Cardiac septum (tissue), 1 donor: ENCODE measurements at regions of chr21 and their contacts with region 1.

Region 1: DNA sequence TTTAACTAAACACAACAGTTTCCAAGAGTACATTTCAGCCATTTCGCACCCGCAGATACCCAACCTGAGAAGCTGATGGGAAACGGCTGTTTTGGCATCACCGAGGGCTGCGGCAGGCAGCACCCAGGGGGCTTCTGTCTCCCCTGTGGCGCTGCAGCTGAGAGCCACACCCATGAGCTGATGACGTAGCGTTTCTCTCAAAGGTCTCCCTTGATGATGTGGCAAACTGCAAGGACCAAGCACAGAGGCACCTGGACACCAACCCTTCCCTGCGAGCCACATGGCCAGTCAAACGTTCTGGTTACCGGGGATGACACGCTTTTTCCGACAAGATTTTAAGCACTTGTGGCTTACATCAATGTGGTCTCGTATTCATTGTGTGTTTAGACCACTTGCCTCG is 150.8 kb upstream of the ERG start:
- DNase-seq: no peak

Region 2: DNA sequence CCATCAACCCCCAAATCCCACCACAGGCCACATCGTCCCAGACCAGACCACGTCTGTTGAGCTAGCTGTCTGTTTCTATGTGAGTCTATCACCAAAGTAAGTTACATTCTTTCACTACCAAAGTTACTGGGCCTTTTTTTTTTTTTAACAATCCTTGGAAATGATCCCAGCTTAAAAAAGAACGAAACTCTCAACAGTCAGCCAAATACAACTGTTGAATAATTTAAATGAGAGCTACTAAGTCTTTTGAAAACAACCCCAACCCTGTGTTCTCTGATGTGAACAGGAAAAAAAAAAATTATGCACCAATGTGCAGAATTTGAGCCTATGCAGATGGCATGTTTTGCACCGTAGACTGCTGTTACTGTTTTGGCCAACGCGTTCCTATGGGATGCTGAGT is 22.7 kb after region 1 on chr21:
- intact Hi-C with region 1: loop called (anchors 2 kb)
- DNase-seq: no peak

Region 3: DNA sequence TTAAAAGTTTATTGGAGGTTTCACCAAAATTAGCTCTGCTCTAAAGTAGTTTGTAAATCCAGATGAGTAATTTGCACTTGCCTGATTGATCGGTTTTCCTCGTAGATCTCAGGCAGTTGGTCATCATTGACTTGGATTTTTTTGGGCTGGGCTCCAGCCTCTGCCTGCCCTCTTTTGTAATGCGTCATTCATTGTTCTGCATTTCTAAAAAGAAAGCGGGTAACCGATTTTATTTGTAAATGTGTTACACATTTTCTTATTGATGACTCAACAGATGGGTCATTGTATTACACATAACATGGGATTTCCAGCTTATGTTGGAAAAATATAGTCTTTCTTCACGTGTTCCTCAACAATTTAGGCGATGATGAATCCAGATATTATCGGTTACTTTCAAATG is 162.1 kb after region 1 on chr21:
- intact Hi-C with region 1: no loop called
- DNase-seq: no peak